Activated B cell treated with CpG ODN at 0.5 μM for 24 hours (primary cell): ENCODE measurements at regions of chr5 and their contacts with region 1.

Region 1: DNA sequence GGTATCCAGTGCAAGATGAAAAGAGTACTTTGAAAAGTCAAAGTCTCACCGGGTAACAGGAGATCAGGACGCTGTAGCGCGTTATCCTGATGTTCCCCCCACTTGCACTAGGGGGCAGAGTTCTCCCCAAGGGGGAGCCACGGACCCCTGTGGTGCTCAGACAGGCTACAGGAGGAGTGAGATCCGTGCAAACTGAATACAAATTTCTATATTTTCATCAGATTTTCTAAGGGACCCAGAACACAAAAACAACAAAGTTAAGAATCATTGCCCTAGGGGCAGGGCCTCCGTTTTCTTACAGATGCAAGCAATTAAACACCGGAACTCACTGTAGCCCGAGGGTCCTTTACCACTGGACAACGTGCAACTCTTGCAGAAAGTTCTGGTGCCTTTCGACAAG is 2.0 kb downstream of the MYO10 start:
- DNase-seq: no peak
- ATAC-seq: no peak
- H3K4me3 Mint-ChIP-seq: peak overlapping the region; percentile 41
- H3K27ac Mint-ChIP-seq: no peak overlapping the region
- H3K4me1 Mint-ChIP-seq: peaks cover 23% of the 10 kb centered on the region
- H3K27me3 Mint-ChIP-seq: peaks cover 72% of the 10 kb centered on the region
- CTCF ChIP-seq: no peak

Region 2: GRCh38 chr5:17132444-17133083 is 198.4 kb after region 1 on chr5:
- CTCF ChIA-PET with region 1: no interaction called
- POLR2A ChIA-PET with region 1: no interaction called
- intact Hi-C with region 1: loop called (anchors 10 kb)
- DNase-seq: no peak
- ATAC-seq: no peak
- H3K4me3 Mint-ChIP-seq: no peak overlapping the region
- H3K27ac Mint-ChIP-seq: no peak overlapping the region
- H3K4me1 Mint-ChIP-seq: no peaks in the 10 kb centered on the region
- H3K27me3 Mint-ChIP-seq: peaks cover 17% of the 10 kb centered on the region
- CTCF ChIP-seq: peak; percentile 23

Region 3: GRCh38 chr5:17189381-17190036 is 255.4 kb after region 1 on chr5:
- CTCF ChIA-PET with region 1: no interaction called
- POLR2A ChIA-PET with region 1: no interaction called
- intact Hi-C with region 1: loop called (anchors 5 kb)
- DNase-seq: peak; percentile 44
- ATAC-seq: peak; percentile 37
- H3K4me3 Mint-ChIP-seq: no peak overlapping the region
- H3K27ac Mint-ChIP-seq: no peak overlapping the region
- H3K4me1 Mint-ChIP-seq: peaks cover 7% of the 10 kb centered on the region
- H3K27me3 Mint-ChIP-seq: peaks cover 3% of the 10 kb centered on the region
- CTCF ChIP-seq: no peak

Region 4: DNA sequence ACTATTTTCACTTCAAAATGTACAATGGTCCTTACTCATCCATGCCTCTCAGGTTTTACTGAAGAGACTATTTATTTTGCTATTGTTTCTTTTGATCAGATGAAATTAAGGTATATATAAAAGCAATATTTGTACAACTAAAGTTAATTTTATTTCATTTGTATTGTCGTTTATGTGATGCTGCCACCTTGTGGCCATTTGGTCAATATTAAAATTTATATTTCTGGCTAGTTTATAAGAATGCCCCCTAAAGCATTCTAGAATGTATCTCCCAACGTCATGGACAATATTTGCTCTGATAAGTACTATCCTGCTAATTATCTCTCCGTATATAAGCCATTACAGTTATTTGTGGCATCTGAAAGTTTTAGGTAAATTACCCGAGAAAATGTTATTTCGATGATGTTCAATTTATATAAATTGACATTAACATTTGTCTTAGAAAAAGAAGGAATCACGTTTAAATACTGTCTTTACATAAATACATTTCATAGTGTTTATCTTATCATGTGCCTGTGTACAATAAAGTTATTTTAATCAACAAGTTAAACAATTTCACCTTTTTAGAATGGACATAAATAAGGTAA is 1380.2 kb after region 1 on chr5:
- CTCF ChIA-PET with region 1: no interaction called
- POLR2A ChIA-PET with region 1: no interaction called
- intact Hi-C with region 1: loop called (anchors 5 kb)
- DNase-seq: no peak
- ATAC-seq: no peak
- H3K4me3 Mint-ChIP-seq: no peak overlapping the region
- H3K27ac Mint-ChIP-seq: no peak overlapping the region
- H3K4me1 Mint-ChIP-seq: no peaks in the 10 kb centered on the region
- H3K27me3 Mint-ChIP-seq: no peaks in the 10 kb centered on the region
- CTCF ChIP-seq: no peak